Mammary epithelial cell (primary cell): ENCODE measurements at regions of chr21 and their contacts with region 1.

Region 1: DNA sequence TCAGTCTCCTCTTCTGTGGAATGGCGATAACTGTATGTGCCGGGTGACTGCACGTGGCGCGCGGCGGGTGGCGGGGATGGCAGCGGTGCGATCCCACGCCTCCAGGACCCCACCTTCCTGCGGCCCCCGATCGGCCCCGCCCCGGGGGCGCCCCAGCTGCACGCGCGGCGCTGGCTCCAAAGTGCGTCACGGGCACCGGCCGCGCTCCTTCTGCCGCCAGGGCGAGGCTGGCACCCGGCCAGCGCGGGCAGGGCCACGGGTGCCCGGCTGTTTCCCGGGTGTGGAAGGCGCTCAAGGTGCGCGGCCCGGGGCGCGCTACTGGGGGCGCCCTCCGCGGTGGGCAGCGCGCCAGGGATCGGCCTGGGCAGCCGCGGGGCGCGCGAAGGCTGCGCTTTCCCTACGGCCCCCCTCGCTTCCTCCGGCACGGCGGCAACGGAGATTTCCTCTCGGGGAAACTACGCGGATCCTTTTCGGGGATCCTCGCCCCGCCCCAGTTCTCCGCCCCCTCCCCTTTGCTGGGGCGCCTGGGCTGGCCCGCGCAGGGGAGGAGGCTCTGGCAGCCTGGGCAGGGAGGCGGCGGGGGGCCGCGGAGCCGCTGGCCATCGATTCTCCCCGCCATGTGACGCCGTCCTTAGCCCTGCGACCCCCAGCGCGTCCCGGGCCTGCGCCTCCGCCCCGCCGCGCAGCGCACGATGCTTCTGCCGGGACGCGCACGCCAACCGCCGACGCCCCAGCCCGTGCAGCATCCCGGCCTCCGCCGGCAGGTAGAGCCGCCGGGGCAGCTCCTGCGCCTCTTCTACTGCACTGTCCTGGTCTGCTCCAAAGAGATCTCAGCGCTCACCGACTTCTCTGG is at the start of gene EVA1C:
- DNase-seq: peak; percentile 69
- H3K4me3 ChIP-seq: peak within 1 kb of the TSS; percentile 68 to 80 (median 69)
- H3K27ac ChIP-seq: peak within 1 kb of the TSS; percentile 86
- H3K4me1 ChIP-seq: peaks cover 33% of the 10 kb centered on the region
- H3K27me3 ChIP-seq: no peaks in the 10 kb centered on the region
- CTCF ChIP-seq: peak; percentile 3 to 20
- total RNA-seq, gene EVA1C: 11.7 to 28.4 TPM

Region 2: DNA sequence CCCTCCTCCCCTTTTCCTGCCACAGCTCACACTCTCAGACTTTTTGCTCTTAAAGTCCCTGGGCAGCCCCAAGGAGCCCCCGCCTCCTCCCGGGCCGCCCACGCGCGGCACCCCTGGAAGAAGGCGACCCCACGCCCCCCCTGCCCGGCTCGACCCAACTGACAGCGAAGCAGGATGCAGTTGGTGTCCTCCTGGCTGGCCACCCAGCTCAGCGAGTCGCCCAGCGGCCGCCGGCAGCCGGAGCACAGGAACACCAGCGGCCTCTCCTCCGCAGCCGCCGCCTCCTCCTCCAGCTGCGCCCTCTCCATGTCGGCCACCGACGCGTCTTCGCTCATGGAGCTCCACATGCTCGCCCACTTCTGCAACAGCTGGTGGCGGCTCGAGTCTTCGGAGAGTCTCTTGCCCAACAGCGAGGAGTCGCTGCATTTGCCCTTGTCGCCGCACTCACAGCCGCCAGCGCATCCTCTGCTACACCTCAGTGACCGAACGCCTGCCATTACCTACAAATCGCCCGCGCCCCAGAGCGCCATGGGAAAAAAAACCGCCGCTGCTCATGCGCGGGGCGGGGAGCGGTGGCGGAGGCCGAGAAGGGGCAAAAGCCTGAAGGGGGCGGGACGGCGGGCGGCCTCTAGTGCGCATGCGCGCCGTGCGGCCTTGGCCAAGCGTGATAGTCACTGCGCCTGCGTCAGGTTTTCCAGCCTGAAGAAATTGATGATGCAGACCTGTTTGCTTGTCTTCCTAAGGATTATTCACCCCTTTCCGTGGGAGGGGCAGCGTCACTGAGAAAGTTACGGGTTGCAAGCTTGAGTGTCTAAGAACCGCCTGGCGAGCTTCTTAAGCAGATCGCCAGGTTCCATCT is 133.6 kb before region 1 on chr21 and contains the start of gene MIS18A:
- CTCF ChIA-PET with region 1: interaction called, 17 read pairs
- dilution Hi-C with region 1: no loop called
- in situ Hi-C with region 1: no loop called
- intact Hi-C with region 1: no loop called
- DNase-seq: peak; percentile 98
- H3K4me3 ChIP-seq: peak within 1 kb of the TSS; percentile 94 to 98 (median 94)
- H3K27ac ChIP-seq: peak within 1 kb of the TSS; percentile 74
- H3K4me1 ChIP-seq: peaks cover 16% of the 10 kb centered on the region
- H3K27me3 ChIP-seq: no peaks in the 10 kb centered on the region
- CTCF ChIP-seq: no peak
- total RNA-seq, gene MIS18A: 4.3 to 14.8 TPM

Region 3: GRCh38 chr21:32348654-32349587 is 63.5 kb before region 1 on chr21:
- CTCF ChIA-PET with region 1: no interaction called
- dilution Hi-C with region 1: no loop called
- in situ Hi-C with region 1: no loop called
- intact Hi-C with region 1: no loop called
- DNase-seq: no peak
- H3K4me3 ChIP-seq: no peak overlapping the region
- H3K27ac ChIP-seq: no peak overlapping the region
- H3K4me1 ChIP-seq: peaks cover 10% of the 10 kb centered on the region
- H3K27me3 ChIP-seq: no peaks in the 10 kb centered on the region
- CTCF ChIP-seq: no peak

Region 4: GRCh38 chr21:32426592-32427051 is 14.2 kb after region 1 on chr21:
- CTCF ChIA-PET with region 1: no interaction called
- dilution Hi-C with region 1: no loop called
- in situ Hi-C with region 1: no loop called
- intact Hi-C with region 1: loop called (anchors 1 kb)
- DNase-seq: peak; percentile 55
- H3K4me3 ChIP-seq: peak overlapping the region in 1 of 3 experiments; percentile 9
- H3K27ac ChIP-seq: peak overlapping the region; percentile 58
- H3K4me1 ChIP-seq: peaks cover 57% of the 10 kb centered on the region
- H3K27me3 ChIP-seq: no peaks in the 10 kb centered on the region
- CTCF ChIP-seq: no peak

Region 5: DNA sequence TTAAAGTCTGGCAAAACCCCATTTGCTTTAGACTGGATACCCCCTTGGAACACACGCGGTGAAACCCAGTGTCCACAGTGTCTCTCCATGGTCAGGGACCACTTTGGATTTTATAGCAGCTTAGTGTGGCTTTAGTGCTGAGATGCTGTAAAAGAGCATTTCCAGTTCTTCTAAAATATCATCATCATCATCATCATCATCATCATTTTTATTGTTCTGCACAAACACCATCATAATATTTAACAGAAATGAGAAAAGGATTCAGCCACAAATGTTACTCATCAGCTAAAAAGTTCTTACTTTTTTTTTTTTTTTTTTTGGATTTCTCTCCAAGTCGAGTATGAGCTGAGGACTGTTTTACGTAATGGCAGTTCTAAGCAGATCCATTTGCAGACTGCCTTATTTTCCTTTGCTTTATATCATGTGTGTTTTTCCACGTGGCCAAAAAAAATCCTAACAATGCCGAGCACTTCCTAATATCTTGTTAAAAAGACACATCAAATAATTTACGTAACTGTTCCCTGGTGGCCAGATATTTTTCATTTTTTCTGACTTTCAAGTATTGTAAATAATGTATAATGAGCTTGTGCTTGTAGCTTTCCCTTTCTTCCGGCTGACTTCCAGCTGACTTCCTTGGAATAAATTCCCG is 62.9 kb after region 1 on chr21:
- CTCF ChIA-PET with region 1: interaction called, 5 read pairs
- dilution Hi-C with region 1: no loop called
- in situ Hi-C with region 1: no loop called
- intact Hi-C with region 1: loop called (anchors 5 kb)
- DNase-seq: no peak
- H3K4me3 ChIP-seq: no peak overlapping the region
- H3K27ac ChIP-seq: no peak overlapping the region
- H3K4me1 ChIP-seq: peaks cover 17% of the 10 kb centered on the region
- H3K27me3 ChIP-seq: no peaks in the 10 kb centered on the region
- CTCF ChIP-seq: no peak

Region 6: DNA sequence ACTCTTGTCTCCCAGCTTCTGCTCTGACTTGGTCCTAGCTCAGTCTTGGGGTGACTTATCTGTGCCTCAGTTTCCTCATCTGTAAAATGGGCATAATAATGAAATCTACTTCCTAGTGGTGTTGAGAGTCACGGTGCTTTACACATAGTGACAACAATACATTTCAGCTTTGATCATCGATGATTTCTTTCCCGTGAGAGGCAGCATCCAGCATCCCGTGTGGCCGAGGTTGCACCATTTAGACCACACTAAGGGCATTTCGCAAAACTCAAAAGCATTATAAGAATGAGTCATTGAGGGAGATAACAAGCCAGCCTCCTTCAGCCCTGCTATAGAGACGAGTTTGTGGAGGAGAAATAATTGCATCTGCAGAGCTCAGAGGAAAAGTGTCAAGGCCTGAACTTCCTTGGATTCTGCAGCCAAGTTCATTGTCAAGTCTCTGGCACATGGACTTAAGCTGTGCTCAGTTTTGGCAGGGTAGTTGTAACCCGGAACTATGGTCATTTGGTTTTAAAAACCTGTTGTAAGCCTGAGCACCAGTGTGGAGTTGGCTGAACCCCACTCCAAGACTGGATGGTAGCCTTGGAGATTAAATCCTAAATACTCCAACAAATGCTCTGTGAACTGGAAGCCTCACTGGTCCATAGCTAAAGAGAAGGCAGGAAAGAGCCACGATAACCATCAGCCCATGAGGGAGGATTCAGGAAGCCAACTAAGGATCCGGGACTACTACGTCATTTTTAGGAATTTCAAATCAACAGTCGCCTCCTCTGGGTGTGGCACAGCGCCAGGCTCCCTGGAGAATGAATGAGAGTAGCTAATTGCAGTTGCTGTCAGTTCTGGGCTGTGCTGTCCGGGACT is 108.7 kb after region 1 on chr21:
- CTCF ChIA-PET with region 1: no interaction called
- dilution Hi-C with region 1: loop called (anchors 5 kb)
- in situ Hi-C with region 1: no loop called
- intact Hi-C with region 1: no loop called
- DNase-seq: peak; percentile 68
- H3K4me3 ChIP-seq: no peak overlapping the region
- H3K27ac ChIP-seq: peak overlapping the region; percentile 0
- H3K4me1 ChIP-seq: peaks cover 22% of the 10 kb centered on the region
- H3K27me3 ChIP-seq: no peaks in the 10 kb centered on the region
- CTCF ChIP-seq: no peak